H1 (cell line): ENCODE measurements at regions of chr16 and their contacts with region 1.

Region 1: DNA sequence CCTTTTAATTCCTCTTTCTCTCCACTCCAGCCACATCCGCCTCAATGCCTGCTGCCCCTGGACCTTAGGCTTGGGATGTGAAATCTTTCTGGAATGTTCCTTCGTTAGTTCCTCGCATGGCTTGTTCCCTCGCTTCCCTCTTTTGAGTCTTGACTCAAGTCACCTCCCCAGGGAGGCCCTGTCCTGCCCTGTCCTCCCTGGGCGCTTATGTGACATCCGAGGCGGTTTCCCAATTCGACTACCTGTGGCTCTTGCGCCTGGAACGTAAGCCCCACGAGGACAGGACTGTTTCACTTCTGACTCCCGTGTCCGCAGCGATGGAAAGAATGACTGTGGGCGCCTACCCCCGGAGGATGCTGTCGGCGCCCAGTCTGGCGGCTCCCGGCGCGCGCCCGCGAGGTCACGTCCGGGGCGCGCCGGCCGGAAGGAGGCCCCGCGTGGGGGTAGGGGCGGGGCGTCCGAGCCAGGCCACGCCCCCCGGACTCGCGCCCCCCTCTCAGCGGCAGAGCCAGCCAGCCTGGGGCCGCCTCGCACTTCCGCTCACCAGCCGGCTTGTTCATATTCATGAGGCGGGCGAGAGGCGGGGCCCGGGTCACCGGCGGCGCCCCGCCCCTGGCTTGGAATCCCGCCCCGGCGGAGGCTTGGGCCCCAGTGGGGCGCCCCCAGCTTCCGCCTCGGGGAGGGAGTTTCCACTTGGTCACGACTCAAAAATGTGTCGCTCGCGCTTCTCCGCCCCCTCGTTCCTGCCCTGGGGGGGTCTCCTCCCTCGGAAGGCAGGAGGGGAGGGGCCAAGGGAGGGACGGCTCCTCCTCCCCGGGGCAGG is 8.4 kb upstream of the GLIS2 start:
- DNase-seq: peak; percentile 90 to 94
- H3K4me3 ChIP-seq: peak overlapping the region; percentile 64 to 84 (median 80)
- H3K27ac ChIP-seq: peak overlapping the region; percentile 46; the same call in 1 of the 2 replicates
- H3K4me1 ChIP-seq: peaks cover 0 to 20% (median 13%) of the 10 kb centered on the region in 4 experiments; a peak in 6 of 7 replicates
- H3K27me3 ChIP-seq: no peaks in the 10 kb centered on the region
- CTCF ChIP-seq: no peak
- EP300 ChIP-seq: peak in 1 of 2 experiments; percentile 17; a peak in 1 of 3 replicates
- POLR2A ChIP-seq: no peak
- RAD21 ChIP-seq: no peak

Region 2: GRCh38 chr16:4183237-4184036 is 124.0 kb before region 1 on chr16:
- CTCF ChIA-PET with region 1: no interaction called
- POLR2A ChIA-PET with region 1: no interaction called
- DNase-seq: peak; percentile 82 to 99
- H3K4me3 ChIP-seq: peak overlapping the region; percentile 63 to 86 (median 78)
- H3K27ac ChIP-seq: peak overlapping the region; percentile 77; the same call in 1 of the 2 replicates
- H3K4me1 ChIP-seq: peaks cover 0 to 3% (median 2%) of the 10 kb centered on the region in 4 experiments; a peak in 1 of 7 replicates
- H3K27me3 ChIP-seq: peaks cover 0 to 3% (median 0%) of the 10 kb centered on the region in 4 experiments; a peak in 1 of 7 replicates
- CTCF ChIP-seq: peak in 1 of 3 experiments; percentile 14; a peak in 1 of 4 replicates
- EP300 ChIP-seq: no peak
- POLR2A ChIP-seq: peak in 1 of 2 experiments; percentile 81; a peak in 2 of 3 replicates
- RAD21 ChIP-seq: no peak; a peak in 1 of 4 replicates

Region 3: GRCh38 chr16:4214215-4214621 is 93.2 kb before region 1 on chr16:
- CTCF ChIA-PET with region 1: no interaction called
- POLR2A ChIA-PET with region 1: no interaction called
- DNase-seq: peak in 1 of 2 experiments; percentile 17
- H3K4me3 ChIP-seq: no peak overlapping the region
- H3K27ac ChIP-seq: no peak overlapping the region
- H3K4me1 ChIP-seq: peaks cover 6 to 17% (median 8%) of the 10 kb centered on the region in 4 experiments
- H3K27me3 ChIP-seq: no peaks in the 10 kb centered on the region
- CTCF ChIP-seq: no peak
- EP300 ChIP-seq: no peak
- POLR2A ChIP-seq: no peak
- RAD21 ChIP-seq: no peak

Region 4: DNA sequence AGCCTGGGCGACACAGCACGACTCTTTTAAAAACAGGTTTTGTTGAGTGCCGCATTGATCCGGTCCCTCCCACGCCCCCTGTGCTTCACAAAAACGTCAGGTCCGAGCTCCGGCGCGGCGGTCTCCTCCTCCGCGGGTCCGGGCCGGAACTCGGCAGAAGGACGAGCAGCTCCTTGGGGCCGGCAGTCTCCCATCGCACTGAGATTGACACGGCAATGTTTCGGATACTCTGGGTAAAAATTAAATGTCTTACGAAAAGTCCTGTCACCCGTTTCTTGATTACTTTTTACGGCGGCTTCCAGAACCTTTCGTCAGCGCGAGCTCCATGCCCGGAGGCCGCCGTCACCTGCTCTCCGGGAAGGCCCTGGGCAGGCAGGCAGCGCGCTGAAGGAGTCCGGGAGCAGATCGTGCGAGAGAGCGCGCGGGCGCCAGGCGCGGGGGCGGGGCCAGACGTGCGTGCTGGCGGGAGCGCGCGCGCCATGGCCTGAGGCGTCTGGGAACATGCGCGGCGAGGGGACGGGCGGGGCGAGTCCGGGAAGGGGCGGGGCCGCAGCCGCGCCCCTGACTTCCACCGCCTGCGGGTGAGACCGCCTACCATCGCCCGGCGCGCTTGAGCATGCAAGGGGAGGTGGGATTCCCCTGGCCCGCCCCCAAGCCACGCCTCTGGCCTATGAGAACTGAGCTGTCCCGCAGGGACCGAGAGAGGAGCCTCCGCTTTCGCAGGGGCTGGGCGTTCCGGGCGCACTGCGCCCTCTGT is 53.9 kb before region 1 on chr16:
- CTCF ChIA-PET with region 1: interaction called, 10 read pairs
- POLR2A ChIA-PET with region 1: interaction called, 403 read pairs
- DNase-seq: peak; percentile 98
- H3K4me3 ChIP-seq: peak overlapping the region; percentile 41 to 70 (median 58)
- H3K27ac ChIP-seq: no peak overlapping the region; the same call in 1 of the 2 replicates
- H3K4me1 ChIP-seq: peaks cover 0 to 3% (median 0%) of the 10 kb centered on the region in 4 experiments; a peak in 1 of 7 replicates
- H3K27me3 ChIP-seq: no peaks in the 10 kb centered on the region
- CTCF ChIP-seq: no peak
- EP300 ChIP-seq: no peak
- POLR2A ChIP-seq: peak; percentile 53 to 70
- RAD21 ChIP-seq: peak; percentile 87 to 91

Region 5: DNA sequence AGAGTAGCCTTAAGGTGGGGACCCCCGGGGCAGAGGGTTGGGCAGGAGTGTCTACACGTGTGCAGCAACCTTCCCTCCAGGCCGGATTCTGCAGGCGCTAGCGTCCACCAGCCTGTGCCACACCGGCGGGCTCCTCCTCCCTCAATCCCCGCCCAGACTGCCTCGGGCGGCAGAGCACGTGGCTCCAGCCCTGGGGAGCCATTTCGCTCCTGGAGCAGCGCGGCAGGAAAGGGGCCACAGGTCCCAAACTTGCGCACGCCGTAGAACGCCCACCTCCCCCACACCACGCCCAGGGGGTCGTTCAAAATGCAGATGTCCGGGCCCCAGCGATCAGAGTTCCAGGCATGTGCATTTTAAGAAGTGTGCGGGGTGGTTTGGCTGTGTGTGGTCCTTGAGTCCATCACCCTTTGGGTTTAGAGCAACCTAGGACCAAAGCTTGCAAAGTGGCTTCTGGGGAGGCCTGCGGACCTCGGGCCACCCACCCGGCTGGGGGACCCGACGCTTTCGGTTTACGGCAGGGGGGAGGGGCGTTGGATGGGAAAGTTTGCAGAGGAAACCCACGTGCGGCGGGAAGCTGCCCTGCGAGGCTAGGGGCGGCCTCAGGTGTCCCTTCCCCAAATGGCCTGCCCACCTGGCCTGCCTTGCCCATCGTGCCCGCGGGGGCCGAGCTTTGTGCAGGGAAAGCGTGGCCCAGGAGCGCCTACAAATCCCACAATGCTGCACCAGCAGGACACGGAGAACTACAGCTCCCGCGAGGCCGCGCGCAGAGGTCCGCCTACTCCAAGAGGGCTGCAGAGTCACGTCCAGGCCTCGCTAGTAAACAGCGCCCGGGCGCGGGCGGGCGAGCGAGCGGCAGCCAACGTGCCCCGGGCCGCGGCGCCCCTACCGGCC is 36.0 kb before region 1 on chr16:
- CTCF ChIA-PET with region 1: interaction called, 12 read pairs
- POLR2A ChIA-PET with region 1: interaction called, 403 read pairs
- DNase-seq: peak in 1 of 2 experiments; percentile 91
- H3K4me3 ChIP-seq: peak overlapping the region; percentile 68 to 97 (median 84)
- H3K27ac ChIP-seq: peak overlapping the region; percentile 96
- H3K4me1 ChIP-seq: peaks cover 3 to 11% (median 8%) of the 10 kb centered on the region in 4 experiments
- H3K27me3 ChIP-seq: no peaks in the 10 kb centered on the region
- CTCF ChIP-seq: peak in 2 of 3 experiments; percentile 7 to 38; a peak in 3 of 4 replicates
- EP300 ChIP-seq: no peak
- POLR2A ChIP-seq: peak in 1 of 2 experiments; percentile 88
- RAD21 ChIP-seq: no peak; a peak in 1 of 4 replicates

Region 6: DNA sequence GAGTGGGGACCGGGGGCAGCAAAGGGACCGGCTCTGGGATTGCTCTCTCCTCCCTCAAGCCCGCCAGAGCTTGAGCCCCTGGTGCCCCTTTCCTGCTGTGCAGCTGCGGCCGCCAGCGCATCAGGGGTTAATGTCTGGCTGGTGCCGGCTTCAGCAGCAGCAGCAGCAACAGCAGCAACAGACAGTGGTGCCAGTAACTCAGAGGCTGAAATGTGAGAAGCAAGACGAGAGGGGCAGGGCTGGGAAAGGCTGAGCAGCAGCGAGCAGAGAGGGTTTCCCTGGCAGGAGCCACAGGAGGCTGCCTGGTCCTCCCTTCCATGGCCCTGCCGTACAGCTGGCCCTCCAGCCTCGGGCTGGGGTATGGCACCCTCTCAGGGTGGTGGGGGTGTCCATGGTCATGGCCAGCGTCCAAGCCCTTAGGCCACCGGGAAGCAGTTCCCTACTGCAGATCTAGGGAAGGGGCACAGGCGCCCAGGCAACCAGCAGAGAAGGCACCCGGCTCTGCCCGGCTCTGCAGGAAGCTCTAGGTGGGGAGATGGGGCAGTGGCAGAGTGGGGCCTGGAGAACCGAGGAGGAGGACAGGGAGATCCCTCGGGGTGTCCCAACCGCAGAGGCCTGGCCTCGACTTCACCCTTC is 13.5 kb before region 1 on chr16:
- CTCF ChIA-PET with region 1: interaction called, 300 read pairs
- POLR2A ChIA-PET with region 1: interaction called, 93 read pairs
- DNase-seq: peak in 1 of 2 experiments; percentile 82
- H3K4me3 ChIP-seq: peak overlapping the region in 3 of 4 experiments; percentile 24 to 50 (median 34); a peak in 6 of 8 replicates
- H3K27ac ChIP-seq: peak overlapping the region; percentile 67
- H3K4me1 ChIP-seq: peaks cover 7 to 23% (median 15%) of the 10 kb centered on the region in 4 experiments
- H3K27me3 ChIP-seq: no peaks in the 10 kb centered on the region
- CTCF ChIP-seq: peak in 1 of 3 experiments; percentile 1; a peak in 1 of 4 replicates
- EP300 ChIP-seq: peak in 1 of 2 experiments; percentile 65; a peak in 1 of 3 replicates
- POLR2A ChIP-seq: peak in 1 of 2 experiments; percentile 26; a peak in 1 of 3 replicates
- RAD21 ChIP-seq: peak in 1 of 2 experiments; percentile 25; a peak in 1 of 4 replicates

Region 7: GRCh38 chr16:4339909-4340308 is 32.5 kb after region 1 on chr16:
- CTCF ChIA-PET with region 1: interaction called, 132 read pairs
- POLR2A ChIA-PET with region 1: interaction called, 4 read pairs
- DNase-seq: no peak
- H3K4me3 ChIP-seq: no peak overlapping the region
- H3K27ac ChIP-seq: no peak overlapping the region
- H3K4me1 ChIP-seq: no peaks in the 10 kb centered on the region; a peak in 2 of 7 replicates
- H3K27me3 ChIP-seq: no peaks in the 10 kb centered on the region
- CTCF ChIP-seq: no peak
- EP300 ChIP-seq: no peak
- POLR2A ChIP-seq: no peak
- RAD21 ChIP-seq: no peak

Region 8: DNA sequence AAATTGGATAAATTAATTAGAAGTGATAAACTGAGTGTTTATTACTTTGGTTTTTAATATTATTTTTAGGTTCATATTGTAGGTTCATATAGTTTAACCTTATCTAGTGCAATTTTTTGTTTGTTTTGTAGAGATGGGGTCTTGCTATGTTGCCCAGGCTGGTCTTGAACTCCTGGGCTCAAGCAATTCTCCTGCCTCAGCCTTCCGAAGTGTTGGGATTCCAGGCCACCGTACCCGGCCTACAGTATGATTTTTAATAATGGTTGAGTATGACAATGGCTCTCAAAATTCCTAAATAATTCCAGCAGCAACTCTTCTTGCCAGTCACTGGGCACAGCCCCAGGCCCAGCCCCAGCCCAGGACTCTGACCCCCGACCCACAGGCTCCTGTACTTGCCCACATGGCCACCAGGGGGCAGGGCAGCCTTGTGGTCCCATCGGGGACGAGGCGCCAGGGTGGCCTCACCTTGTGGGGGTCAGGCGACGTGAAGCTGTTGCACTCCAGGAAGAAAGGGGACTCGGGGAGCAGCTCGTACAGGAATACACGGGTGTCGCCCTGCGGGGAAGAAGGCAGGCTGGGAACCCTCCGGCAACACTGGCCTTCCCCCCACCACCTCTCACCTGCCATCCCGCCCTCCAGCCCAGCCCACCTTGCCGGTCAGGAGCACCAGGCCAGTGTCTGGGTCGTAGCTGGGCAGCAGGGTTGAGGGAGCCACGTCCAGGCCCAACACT is 51.6 kb after region 1 on chr16:
- CTCF ChIA-PET with region 1: interaction called, 22 read pairs
- POLR2A ChIA-PET with region 1: no interaction called
- DNase-seq: peak in 1 of 2 experiments; percentile 99
- H3K4me3 ChIP-seq: no peak overlapping the region
- H3K27ac ChIP-seq: no peak overlapping the region
- H3K4me1 ChIP-seq: peaks cover 0 to 3% (median 1%) of the 10 kb centered on the region in 4 experiments; a peak in 3 of 7 replicates
- H3K27me3 ChIP-seq: no peaks in the 10 kb centered on the region
- CTCF ChIP-seq: peak; percentile 90 to 98 (median 94)
- EP300 ChIP-seq: no peak
- POLR2A ChIP-seq: no peak
- RAD21 ChIP-seq: peak; percentile 94 to 98

Region 9: GRCh38 chr16:4392382-4393239 is 85.2 kb after region 1 on chr16:
- CTCF ChIA-PET with region 1: interaction called, 10 read pairs
- POLR2A ChIA-PET with region 1: interaction called, 6 read pairs
- DNase-seq: peak; percentile 59 to 89
- H3K4me3 ChIP-seq: peak overlapping the region in 2 of 4 experiments; percentile 10 to 25; a peak in 2 of 8 replicates
- H3K27ac ChIP-seq: peak overlapping the region; percentile 90
- H3K4me1 ChIP-seq: peaks cover 12 to 50% (median 43%) of the 10 kb centered on the region in 4 experiments
- H3K27me3 ChIP-seq: no peaks in the 10 kb centered on the region
- CTCF ChIP-seq: no peak; a peak in 1 of 4 replicates
- EP300 ChIP-seq: peak; percentile 8 to 91
- POLR2A ChIP-seq: peak in 1 of 2 experiments; percentile 55; a peak in 2 of 3 replicates
- RAD21 ChIP-seq: no peak